ENCODE measurements at regions of chr3 and their contacts with region 1.

Region 1: GRCh38 chr3:39497753-39498152 is 30.3 kb downstream of the MOBP start:
- DNase-seq: no peak
- H3K4me3 Mint-ChIP-seq: no peak overlapping the region
- H3K27ac Mint-ChIP-seq: no peak overlapping the region
- H3K4me1 Mint-ChIP-seq: no peaks in the 10 kb centered on the region
- H3K27me3 Mint-ChIP-seq: peaks cover 39% of the 10 kb centered on the region

Region 2: DNA sequence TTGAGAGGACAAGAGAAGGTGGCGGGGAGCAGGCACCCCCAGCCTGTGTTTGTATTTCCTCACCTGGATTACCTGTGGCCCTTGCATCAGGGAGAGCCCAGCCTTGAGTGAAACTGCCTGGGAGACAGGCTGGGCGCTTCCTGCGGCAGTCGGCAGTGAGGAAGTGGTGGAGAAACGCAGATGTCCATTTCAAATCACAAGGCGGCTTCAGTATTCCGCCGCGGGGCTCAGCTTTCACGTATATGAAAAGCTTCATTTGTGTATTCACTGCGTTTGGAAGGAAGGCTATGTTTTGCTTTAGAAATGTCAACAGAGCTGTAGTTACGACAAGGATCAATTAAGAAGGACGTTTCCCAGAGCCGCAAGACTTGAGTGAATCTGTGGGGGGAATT is 1803.5 kb before region 1 on chr3:
- intact Hi-C with region 1: no loop called
- DNase-seq: no peak
- H3K4me3 Mint-ChIP-seq: no peak overlapping the region
- H3K27ac Mint-ChIP-seq: no peak overlapping the region
- H3K4me1 Mint-ChIP-seq: no peaks in the 10 kb centered on the region
- H3K27me3 Mint-ChIP-seq: peaks cover 8% of the 10 kb centered on the region

Region 3: GRCh38 chr3:39260957-39261356 is 236.8 kb before region 1 on chr3:
- intact Hi-C with region 1: no loop called
- DNase-seq: peak; percentile 71
- H3K4me3 Mint-ChIP-seq: peak overlapping the region; percentile 71
- H3K27ac Mint-ChIP-seq: peak overlapping the region; percentile 73
- H3K4me1 Mint-ChIP-seq: peaks cover 87% of the 10 kb centered on the region
- H3K27me3 Mint-ChIP-seq: peaks cover 2% of the 10 kb centered on the region

Region 4: DNA sequence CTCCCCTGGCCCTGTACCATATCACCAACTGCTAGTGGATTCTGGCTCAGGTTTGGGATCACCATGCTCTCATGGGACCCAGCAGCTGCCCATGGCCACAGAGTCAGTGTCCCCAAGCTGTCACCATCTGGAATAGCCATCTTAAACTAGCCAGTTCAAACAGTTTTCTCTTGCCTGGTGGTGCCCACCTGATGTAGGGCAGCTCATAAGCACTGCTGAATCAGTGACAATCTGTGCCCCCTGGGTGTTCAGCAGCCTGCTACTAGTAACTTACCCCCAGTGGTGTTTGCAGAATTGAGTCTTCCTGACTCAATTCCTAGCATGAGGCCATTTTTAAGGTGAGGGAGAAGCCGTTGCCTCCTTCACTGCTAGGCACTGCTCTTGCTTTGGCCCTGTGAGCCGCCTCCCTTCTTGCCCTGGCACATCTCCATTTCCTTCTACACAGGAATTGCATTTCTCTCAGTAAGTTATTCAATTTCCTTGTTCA is 83.3 kb before region 1 on chr3:
- intact Hi-C with region 1: loop called (anchors 1 kb)
- DNase-seq: no peak
- H3K4me3 Mint-ChIP-seq: no peak overlapping the region
- H3K27ac Mint-ChIP-seq: peak overlapping the region; percentile 23
- H3K4me1 Mint-ChIP-seq: peaks cover 24% of the 10 kb centered on the region
- H3K27me3 Mint-ChIP-seq: peaks cover 4% of the 10 kb centered on the region

Region 5: GRCh38 chr3:39447637-39448483 is 49.9 kb before region 1 on chr3:
- intact Hi-C with region 1: loop called (anchors 1 kb)
- DNase-seq: peak; percentile 46
- H3K4me3 Mint-ChIP-seq: no peak overlapping the region
- H3K27ac Mint-ChIP-seq: no peak overlapping the region
- H3K4me1 Mint-ChIP-seq: no peaks in the 10 kb centered on the region
- H3K27me3 Mint-ChIP-seq: peaks cover 11% of the 10 kb centered on the region

Region 6: DNA sequence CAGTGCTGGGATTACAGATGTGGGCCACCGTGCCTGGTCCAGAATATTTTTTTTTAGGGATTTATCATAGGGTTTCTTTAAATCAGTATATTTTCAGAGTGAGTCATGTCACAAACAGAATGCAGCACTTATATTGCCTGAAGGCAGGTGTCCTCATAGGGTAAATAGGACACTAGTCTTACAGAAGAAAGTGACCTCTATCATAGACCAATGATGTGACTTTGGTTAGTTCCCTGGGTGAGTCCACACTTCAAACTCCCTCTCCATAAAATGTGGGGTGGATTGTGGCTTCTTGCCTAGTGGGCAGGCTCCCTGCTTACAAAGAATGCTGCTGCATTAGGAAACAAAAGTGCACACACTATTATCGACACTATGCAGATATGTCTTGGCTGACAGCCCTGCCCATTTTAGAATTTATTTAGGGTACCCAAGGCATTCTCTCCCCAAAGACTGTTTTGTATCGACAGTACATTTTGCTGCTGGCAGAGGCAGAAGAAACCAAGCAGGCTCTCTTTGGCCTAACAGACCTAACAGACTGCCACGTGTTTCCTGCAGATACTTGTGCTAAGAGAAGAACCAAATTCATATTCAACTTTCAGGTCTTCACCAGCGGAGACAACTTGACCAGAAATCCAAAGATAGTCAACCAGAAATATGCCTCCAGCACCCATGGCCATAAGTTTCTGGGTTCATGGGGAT is 94.7 kb after region 1 on chr3:
- intact Hi-C with region 1: no loop called
- DNase-seq: no peak
- H3K4me3 Mint-ChIP-seq: no peak overlapping the region
- H3K27ac Mint-ChIP-seq: no peak overlapping the region
- H3K4me1 Mint-ChIP-seq: no peaks in the 10 kb centered on the region
- H3K27me3 Mint-ChIP-seq: peaks cover 4% of the 10 kb centered on the region

Measured in activated T-helper 1 cell treated with anti-CD3 and anti-CD28 coated beads, Interleukin-12 subunit alpha, Interleukin-12 subunit beta, Interleukin-2, Interleukin-4 antibody, amounts not matched to agents 30 ng/mL and 10 ng/mL and 1 ng/mL, durations not matched to agents 14 hours and 24 hours and 36 hours (primary cell).